ENCODE measurements at regions of chr18 and their contacts with region 1.

Region 1: DNA sequence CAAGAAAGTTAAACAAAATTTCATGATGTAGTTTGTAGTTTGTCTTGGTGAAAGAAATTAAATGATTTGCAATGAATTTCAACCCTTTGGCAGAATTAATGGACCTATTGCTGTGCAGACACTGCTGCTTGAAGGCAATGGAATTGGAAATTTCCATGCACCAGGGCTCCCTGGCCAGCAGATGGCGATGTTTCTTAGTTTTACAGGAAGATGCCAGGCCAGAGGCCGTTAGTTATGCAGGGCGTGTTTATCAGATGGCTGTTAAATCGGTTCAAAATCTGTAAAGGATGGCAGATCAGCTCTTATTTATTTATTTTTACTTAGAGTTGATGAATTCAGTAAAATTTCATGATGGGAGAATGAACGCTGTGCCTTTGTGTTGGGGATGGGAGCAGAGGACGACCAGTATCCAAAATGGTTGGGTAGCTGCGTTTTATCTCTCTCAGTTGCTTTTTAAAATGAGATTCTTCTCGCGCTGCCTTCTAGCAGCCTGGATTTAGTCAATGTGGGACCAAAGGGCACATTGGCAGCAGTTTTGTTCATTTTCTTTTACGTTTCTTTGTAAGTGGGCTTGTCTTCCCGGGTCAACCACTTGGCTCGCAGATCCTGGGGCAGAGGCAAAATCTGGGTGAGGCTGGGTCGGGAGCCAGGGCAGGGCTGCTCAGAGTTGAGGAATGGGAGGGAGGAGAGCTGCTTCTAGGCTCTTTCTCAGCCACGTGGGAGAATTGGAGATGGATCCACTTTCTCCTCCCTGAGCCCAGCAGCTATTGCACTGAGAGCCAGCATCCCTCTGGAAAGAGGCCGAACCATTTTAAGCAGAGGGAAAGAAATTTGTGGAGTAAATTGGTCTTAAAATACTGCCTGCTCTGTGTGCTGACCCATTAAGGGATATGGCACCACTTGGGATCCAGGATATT is 344.0 kb downstream of the PIK3C3 start:
- DNase-seq: peak; percentile 8
- H3K4me3 ChIP-seq: no peak overlapping the region
- H3K27me3 ChIP-seq: no peaks in the 10 kb centered on the region
- CTCF ChIP-seq: peak; percentile 94

Region 2: GRCh38 chr18:42072407-42072806 is 226.6 kb before region 1 on chr18:
- CTCF ChIA-PET with region 1: no interaction called
- POLR2A ChIA-PET with region 1: no interaction called
- DNase-seq: no peak
- H3K4me3 ChIP-seq: no peak overlapping the region
- H3K27me3 ChIP-seq: no peaks in the 10 kb centered on the region
- CTCF ChIP-seq: no peak

Region 3: DNA sequence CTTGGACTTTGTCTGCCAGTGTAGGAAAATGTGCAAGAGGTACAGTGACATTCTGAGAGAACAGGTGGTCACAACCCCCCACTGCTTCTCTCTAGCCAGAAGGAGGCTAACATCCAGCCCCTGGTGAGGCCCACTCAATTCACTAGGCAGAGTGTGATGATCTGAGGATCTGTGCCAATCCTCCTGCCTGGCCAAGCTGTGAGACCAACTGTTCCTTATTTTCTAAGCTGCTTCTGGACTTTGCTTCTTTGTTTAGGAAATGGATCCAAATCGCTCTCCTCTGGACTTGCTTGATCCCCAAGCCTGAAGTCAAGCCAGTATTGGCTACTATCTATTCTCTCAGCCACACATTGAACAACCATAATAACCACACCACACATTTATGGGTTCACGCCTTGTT is 141.1 kb before region 1 on chr18:
- CTCF ChIA-PET with region 1: no interaction called
- POLR2A ChIA-PET with region 1: no interaction called
- DNase-seq: no peak
- H3K4me3 ChIP-seq: no peak overlapping the region
- H3K27me3 ChIP-seq: no peaks in the 10 kb centered on the region
- CTCF ChIP-seq: no peak

Region 4: GRCh38 chr18:42310956-42311355 is 11.9 kb after region 1 on chr18:
- CTCF ChIA-PET with region 1: interaction called, 10 read pairs
- POLR2A ChIA-PET with region 1: no interaction called
- DNase-seq: no peak
- H3K4me3 ChIP-seq: no peak overlapping the region
- H3K27me3 ChIP-seq: no peaks in the 10 kb centered on the region
- CTCF ChIP-seq: no peak

Region 5: DNA sequence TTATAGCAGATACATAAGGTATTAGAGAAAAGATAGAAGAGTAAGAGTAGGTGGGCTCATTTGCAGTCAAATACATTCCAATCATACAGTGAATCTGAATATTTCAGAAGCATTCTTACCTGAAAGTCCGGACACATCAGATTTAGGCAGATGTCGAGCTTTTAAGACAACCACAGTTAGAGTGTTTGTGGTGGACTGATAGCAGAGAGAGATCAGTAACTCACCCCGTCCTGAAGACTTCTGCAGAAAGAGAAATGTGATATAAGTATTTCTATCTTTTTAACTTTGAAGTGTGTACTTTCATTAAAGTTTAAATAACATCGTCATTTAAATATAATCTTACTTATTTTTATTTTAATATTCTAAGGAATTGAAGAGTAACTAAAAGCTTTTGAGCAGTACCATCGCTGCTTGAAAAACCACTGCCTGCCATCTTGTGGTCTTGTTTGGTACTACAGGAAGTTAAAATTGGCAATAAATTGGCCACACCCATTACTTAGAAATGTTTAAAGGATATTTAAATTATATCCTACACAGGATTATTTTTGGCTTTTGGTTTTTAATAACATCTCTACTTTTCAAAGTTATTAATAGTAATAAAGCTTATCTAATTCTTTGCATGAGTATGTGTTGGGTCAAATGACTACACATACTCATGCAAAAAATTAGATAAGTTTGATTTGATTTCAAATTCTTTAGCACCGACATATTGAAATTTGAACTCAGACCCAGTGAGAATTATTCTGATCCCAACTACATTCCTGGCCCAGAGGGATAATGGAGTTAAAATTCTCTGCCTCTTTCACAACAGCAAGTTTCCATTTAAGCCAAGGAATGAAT is 972.8 kb after region 1 on chr18:
- CTCF ChIA-PET with region 1: interaction called, 25 read pairs
- POLR2A ChIA-PET with region 1: no interaction called
- DNase-seq: peak; percentile 3
- H3K4me3 ChIP-seq: no peak overlapping the region
- H3K27me3 ChIP-seq: no peaks in the 10 kb centered on the region
- CTCF ChIP-seq: peak; percentile 74